ENCODE measurements at regions of chr15 and their contacts with region 1.

Region 1: GRCh38 chr15:35289024-35289617 is 204.0 kb upstream of the NANOGP8 start:
- DNase-seq: no peak
- H3K4me3 Mint-ChIP-seq: no peak overlapping the region
- H3K27ac Mint-ChIP-seq: no peak overlapping the region
- H3K4me1 Mint-ChIP-seq: no peaks in the 10 kb centered on the region
- H3K27me3 Mint-ChIP-seq: peaks cover 1% of the 10 kb centered on the region

Region 2: DNA sequence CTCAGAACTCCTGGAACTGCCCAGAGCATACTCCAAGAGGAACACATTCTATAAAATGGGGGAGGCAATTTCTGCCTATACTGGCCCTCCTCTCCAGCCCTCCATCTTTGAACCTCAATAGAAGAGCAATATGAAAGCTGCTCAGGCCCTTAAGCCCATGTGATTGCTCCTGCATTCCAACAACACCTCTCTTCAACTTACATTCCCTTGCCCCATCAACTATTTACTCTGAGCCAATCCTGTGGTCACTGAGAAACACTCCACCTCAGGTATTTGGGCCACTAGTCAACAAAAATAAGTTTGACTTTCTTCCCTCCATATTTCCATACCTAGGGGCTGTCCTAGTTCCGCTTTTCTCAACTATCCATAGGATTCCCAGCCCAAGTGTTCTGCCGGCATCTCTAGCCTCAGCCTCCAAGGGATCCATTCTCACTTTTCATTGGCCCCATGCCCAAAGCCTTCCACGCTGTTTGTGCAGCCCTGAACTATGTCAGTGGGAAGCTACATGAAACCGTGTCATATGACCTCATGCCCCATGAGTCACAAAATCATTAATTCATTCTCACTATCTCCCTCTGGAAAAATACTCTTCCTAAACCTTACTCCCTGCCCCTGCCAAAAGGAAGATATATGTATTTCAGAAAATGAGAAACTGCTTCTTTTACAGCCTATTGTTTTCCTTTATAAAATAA is 595.9 kb before region 1 on chr15:
- CTCF ChIA-PET with region 1: no interaction called
- POLR2A ChIA-PET with region 1: no interaction called
- intact Hi-C with region 1: no loop called
- DNase-seq: no peak
- H3K4me3 Mint-ChIP-seq: no peak overlapping the region
- H3K27ac Mint-ChIP-seq: no peak overlapping the region
- H3K4me1 Mint-ChIP-seq: no peaks in the 10 kb centered on the region
- H3K27me3 Mint-ChIP-seq: peaks cover 8% of the 10 kb centered on the region

Region 3: DNA sequence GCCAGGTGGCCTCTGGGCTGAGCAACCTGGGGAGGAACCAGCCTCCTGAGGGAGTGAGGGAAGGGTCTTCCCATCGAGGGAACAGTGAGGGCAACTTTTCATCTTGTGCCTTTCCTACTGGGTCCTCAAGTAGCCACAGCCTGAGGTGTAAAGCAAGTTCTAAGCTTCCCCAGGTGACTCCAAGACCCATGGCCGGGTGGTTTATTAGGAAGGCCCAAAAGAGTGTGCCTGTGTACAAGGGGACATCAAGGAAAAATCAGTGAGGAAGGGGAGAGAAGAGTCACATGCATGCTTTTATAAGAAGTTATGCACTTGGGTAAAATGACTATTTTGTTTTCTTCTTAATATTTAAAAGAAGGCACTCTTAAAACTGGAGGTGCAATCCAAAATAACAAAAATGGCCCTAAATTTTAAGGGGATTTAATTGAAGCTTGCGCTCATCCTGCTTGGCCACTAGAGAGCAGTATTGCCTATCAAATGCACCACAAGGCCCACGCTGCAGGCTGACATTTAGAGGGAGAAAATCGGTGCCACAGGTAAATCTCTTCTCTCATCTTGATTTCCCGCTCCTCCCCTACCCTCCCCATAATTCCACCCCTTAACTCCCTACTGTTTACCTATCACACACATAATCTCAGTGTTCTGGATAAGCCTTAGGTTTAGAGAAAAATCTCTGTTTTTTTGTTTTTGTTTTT is 210.8 kb before region 1 on chr15:
- CTCF ChIA-PET with region 1: no interaction called
- POLR2A ChIA-PET with region 1: no interaction called
- intact Hi-C with region 1: loop called (anchors 1 kb)
- DNase-seq: peak; percentile 39
- H3K4me3 Mint-ChIP-seq: no peak overlapping the region
- H3K27ac Mint-ChIP-seq: no peak overlapping the region
- H3K4me1 Mint-ChIP-seq: no peaks in the 10 kb centered on the region
- H3K27me3 Mint-ChIP-seq: peaks cover 1% of the 10 kb centered on the region

Region 4: GRCh38 chr15:35260941-35261340 is 28.2 kb before region 1 on chr15:
- CTCF ChIA-PET with region 1: interaction called, 10 read pairs
- POLR2A ChIA-PET with region 1: no interaction called
- intact Hi-C with region 1: no loop called
- DNase-seq: no peak
- H3K4me3 Mint-ChIP-seq: no peak overlapping the region
- H3K27ac Mint-ChIP-seq: no peak overlapping the region
- H3K4me1 Mint-ChIP-seq: no peaks in the 10 kb centered on the region
- H3K27me3 Mint-ChIP-seq: no peaks in the 10 kb centered on the region